GM10248 (cell line): ENCODE measurements at regions of chr10 and their contacts with region 1.

Region 1: GRCh38 chr10:102743588-102744373 is at the start of gene WBP1L:
- DNase-seq: peak; percentile 95
- CTCF ChIP-seq: no peak

Region 2: GRCh38 chr10:102691285-102692066 is 52.3 kb before region 1 on chr10:
- CTCF ChIA-PET with region 1: no interaction called
- POLR2A ChIA-PET with region 1: no interaction called
- DNase-seq: no peak
- CTCF ChIP-seq: no peak

Region 3: GRCh38 chr10:102720775-102721301 is 22.9 kb before region 1 on chr10:
- CTCF ChIA-PET with region 1: interaction called, 10 read pairs
- POLR2A ChIA-PET with region 1: interaction called, 3 read pairs
- DNase-seq: no peak
- CTCF ChIP-seq: no peak